Body of pancreas (tissue), 4 donors: ENCODE measurements at regions of chr2 and their contacts with region 1.

Region 1: GRCh38 chr2:238784671-238785527 is 63.0 kb upstream of the TWIST2 start:
- DNase-seq: peak; percentile 63 to 76 (median 68)
- ATAC-seq: peak; percentile 73
- H3K4me3 ChIP-seq: no peak overlapping the region
- H3K27ac ChIP-seq: no peak overlapping the region
- H3K4me1 ChIP-seq: no peaks in the 10 kb centered on the region
- H3K27me3 ChIP-seq: no peaks in the 10 kb centered on the region
- CTCF ChIP-seq: peak; percentile 69 to 84 (median 77)
- POLR2A ChIP-seq: no peak

Region 2: GRCh38 chr2:238352361-238352760 is 432.5 kb before region 1 on chr2:
- intact Hi-C with region 1: loop called (anchors 10 kb)
- DNase-seq: no peak
- ATAC-seq: no peak
- H3K4me3 ChIP-seq: no peak overlapping the region
- H3K27ac ChIP-seq: no peak overlapping the region
- H3K4me1 ChIP-seq: peaks cover 9% of the 10 kb centered on the region
- H3K27me3 ChIP-seq: no peaks in the 10 kb centered on the region
- CTCF ChIP-seq: no peak
- POLR2A ChIP-seq: no peak

Region 3: DNA sequence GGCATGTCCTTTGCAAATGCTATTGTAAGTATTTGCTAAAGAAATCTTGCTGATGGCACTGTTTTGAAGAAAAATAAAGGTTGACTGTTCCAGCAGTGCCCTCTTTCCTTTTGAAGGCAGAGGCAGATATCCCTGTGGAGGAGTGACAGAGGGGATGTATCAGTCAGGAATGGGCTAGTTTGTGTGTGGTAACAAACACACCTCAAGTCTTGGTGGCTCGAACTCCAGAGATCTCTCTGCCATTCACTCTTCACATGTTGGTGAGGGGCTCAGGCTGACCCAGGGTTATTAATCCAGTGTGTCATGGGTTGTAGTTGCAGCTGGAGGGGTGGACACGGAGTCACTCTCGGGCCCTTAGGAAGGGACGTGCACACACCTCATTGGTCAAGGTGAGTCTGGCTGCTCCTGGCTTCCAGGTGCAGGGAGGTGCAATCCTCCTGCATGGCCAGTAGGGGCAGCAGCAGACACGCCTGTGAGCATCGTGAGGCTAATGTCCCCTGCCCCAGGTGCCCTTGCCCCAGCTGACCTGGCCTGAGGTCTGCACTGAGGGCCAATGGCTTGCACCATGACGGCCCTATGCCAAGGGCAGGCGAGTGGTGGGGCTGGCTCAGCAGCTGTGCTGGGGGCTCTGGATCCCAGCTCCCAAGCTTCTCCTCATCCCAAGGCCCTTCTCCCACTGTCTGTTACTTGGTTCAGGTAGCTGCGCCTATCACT is 211.7 kb before region 1 on chr2:
- intact Hi-C with region 1: no loop called
- DNase-seq: peak in 2 of 4 donors; percentile 17 to 30
- ATAC-seq: peak; percentile 51
- H3K4me3 ChIP-seq: no peak overlapping the region
- H3K27ac ChIP-seq: peak overlapping the region; percentile 44 to 77 (median 58)
- H3K4me1 ChIP-seq: no peaks in the 10 kb centered on the region
- H3K27me3 ChIP-seq: no peaks in the 10 kb centered on the region
- CTCF ChIP-seq: peak; percentile 16 to 48 (median 42)
- POLR2A ChIP-seq: no peak

Region 4: GRCh38 chr2:239075918-239076758 is 291.2 kb after region 1 on chr2:
- intact Hi-C with region 1: no loop called
- DNase-seq: peak in 1 of 4 donors; percentile 11
- ATAC-seq: no peak
- H3K4me3 ChIP-seq: no peak overlapping the region
- H3K27ac ChIP-seq: no peak overlapping the region
- H3K4me1 ChIP-seq: no peaks in the 10 kb centered on the region
- H3K27me3 ChIP-seq: no peaks in the 10 kb centered on the region
- CTCF ChIP-seq: no peak
- POLR2A ChIP-seq: no peak